ENCODE measurements at regions of chr6 and their contacts with region 1.

Region 1: DNA sequence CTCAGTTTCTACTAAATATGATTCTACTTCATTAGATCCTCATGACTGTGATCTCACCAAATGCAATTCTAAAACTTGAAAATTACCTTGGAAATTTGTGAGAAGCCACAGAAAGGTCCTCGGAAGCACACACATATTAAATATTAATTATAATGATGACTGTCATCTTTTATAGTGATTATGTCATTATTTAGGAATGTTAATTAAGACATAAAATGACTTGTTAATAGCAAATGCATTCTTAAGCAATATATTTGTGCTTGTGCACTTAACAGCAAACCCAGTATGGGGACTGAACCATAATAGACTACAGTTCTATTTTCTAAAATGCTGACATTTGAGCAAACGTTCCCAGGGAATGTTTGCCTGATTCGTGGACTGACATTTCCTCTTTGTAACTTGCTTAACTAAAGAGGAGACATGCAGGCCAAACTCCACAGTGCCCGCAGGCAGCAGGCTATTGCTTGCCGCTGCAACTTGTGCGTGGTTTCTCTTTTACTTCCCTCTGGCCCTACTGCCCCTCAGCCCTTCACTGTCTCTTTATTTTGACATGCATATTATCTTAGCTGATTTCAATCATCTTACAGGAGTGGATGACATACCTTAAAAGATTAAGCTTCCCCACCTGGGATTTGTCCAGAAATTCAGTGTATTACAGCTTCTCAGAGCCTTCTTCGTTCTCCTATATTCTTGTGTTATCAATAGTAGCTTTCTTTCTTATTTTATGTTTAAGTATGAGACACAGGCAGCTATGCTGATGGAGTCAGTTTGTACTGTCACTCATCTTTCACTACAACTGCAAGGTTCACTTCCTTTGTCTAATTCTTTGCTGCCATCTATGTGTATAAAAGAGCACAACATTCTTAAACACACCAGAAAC is 141.5 kb downstream of the GMDS start:
- DNase-seq: peak; percentile 36
- H3K4me3 ChIP-seq: no peak overlapping the region
- CTCF ChIP-seq: peak; percentile 48

Region 2: DNA sequence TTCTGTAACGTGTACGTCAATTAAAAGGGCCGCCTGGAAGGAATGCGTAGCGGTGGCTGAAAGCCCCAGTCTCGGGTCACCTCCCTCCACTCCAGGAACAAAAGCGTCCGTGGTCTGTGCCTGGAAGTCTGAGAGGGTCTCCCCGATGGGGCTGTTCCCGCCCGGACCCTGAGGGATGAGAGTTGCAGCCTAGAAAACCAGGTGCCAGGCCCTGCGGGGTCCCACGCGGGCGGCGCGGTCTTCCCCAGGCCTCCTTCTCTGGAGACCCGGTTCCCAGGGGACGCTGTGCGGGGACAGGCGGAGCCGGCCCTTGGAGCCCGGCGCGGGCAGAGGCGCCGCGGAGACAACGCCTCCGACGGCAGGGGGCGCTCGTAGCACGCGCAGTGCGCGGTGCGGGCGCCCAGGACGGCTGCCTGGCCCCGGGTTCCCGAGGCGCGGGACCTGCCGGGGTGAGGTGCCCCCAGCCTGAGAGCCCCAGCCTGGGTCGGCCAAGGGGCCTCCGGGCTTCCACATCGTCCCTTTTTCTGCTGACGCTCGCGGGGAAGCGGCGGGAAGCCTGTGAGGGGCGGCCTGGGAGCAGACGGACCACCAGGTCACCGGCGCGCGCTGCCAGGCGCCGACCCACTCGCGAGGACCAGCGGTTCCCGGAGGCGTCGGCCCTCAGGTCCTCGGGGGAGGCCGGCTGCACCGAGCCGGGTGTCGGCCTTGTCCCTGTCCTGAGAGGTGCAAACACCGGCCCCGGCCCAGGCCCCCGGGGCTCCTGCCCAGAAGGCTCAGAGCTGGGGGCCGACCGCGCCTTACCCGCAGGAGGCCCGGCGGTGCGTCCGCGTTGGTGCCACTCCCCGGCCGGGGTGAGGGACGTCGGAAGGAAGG is 499.5 kb before region 1 on chr6:
- in situ Hi-C with region 1: loop called (anchors 5 kb)
- DNase-seq: no peak
- H3K4me3 ChIP-seq: peak overlapping the region; percentile 37
- CTCF ChIP-seq: peak; percentile 70

Region 3: DNA sequence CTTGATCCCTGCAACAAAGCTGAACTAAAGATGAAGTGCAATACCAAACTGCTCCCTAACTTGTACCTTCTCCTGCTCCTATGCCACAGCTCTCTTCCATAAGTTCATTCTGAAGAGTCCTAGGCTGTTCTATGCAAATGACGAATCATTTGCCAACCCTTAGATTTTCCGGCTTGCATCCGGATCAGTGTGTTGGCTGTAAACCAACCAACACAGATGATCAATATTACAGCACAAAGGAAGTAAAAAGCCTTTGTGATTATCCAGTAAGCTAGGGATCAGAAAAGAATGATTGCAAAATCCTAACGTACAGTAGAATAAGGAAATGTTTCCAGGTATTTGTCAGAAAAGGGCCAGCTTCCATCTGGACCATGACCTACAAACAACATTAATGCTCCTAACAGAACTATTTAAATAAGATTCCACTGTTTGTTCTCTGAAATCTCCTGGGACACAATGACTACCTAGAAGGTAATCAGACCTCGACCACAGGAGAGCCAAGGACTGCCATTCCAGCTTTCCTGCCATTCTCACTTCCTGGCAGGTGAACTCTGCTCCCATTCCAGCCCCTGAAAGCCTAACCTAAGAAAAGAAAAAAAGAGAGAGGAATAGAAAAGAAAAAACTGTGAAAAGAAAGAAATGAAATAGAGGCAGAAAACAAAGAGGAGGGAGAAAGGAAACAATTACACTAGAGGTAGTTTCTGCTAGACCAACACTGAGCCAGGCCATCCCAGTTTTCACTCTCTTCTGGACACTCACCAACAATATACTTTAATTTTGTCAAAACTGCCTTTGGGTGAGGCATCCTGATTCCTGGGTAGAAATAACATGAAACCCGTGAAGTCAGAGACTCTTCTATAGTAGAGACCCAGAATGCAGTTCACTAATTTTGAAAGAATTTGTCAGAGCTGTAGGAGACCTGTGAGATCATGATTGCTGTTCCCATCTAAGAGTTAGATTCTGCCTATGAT is 121.8 kb after region 1 on chr6:
- in situ Hi-C with region 1: no loop called
- DNase-seq: peak; percentile 16
- H3K4me3 ChIP-seq: no peak overlapping the region
- CTCF ChIP-seq: no peak

Region 4: GRCh38 chr6:2634139-2634964 is 530.5 kb after region 1 on chr6:
- in situ Hi-C with region 1: loop called (anchors 10 kb)
- DNase-seq: peak; percentile 70
- H3K4me3 ChIP-seq: peak overlapping the region; percentile 19
- CTCF ChIP-seq: peak; percentile 97

Measured in astrocyte of the cerebellum (primary cell).